Activated T-helper 2 cell treated with anti-CD3 and anti-CD28 coated beads, Interferon-gamma antibody, Interleukin-2, Interleukin-4, amounts not matched to agents 10 μg/mL and 5 μg/mL and 100 μg/mL, durations not matched to agents 14 hours and 24 hours and 36 hours (primary cell): ENCODE measurements at regions of chr9 and their contacts with region 1.

Region 1: GRCh38 chr9:98791147-98792095 is 4.9 kb downstream of the ANKS6 start:
- DNase-seq: peak; percentile 55
- H3K4me3 Mint-ChIP-seq: no peak overlapping the region
- H3K27ac Mint-ChIP-seq: no peak overlapping the region
- H3K4me1 Mint-ChIP-seq: peaks cover 20% of the 10 kb centered on the region
- H3K27me3 Mint-ChIP-seq: peaks cover 13% of the 10 kb centered on the region

Region 2: GRCh38 chr9:98315551-98316060 is 475.8 kb before region 1 on chr9:
- intact Hi-C with region 1: loop called (anchors 1 kb)
- DNase-seq: peak; percentile 65
- H3K4me3 Mint-ChIP-seq: no peak overlapping the region
- H3K27ac Mint-ChIP-seq: no peak overlapping the region
- H3K4me1 Mint-ChIP-seq: peaks cover 2% of the 10 kb centered on the region
- H3K27me3 Mint-ChIP-seq: peaks cover 4% of the 10 kb centered on the region

Region 3: DNA sequence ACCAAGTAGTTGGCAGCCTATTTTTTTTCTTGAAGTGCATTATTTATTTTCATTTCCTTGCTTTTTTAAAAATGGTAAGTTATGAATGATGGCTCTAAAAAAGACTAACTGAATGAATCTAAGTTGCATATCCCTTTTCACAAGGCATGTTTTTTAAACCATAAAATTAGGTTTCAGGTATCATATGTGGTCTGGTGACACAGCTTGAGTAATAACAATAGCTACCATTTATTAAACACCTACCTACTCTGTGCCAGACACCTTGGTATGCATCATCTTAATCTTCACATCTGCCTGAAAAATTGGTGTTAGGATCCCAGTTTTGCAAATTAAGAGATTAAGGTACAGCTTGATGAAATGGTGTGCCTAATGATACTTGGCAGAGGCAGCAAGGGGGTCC is 78.4 kb before region 1 on chr9:
- intact Hi-C with region 1: no loop called
- DNase-seq: no peak
- H3K4me3 Mint-ChIP-seq: no peak overlapping the region
- H3K27ac Mint-ChIP-seq: no peak overlapping the region
- H3K4me1 Mint-ChIP-seq: no peaks in the 10 kb centered on the region
- H3K27me3 Mint-ChIP-seq: peaks cover 40% of the 10 kb centered on the region